Naive thymus-derived CD4-positive, alpha-beta T cell (primary cell): ENCODE measurements at regions of chr6 and their contacts with region 1.

Region 1: GRCh38 chr6:16319813-16320532 is 81.6 kb downstream of the GMPR start:
- DNase-seq: peak; percentile 33 to 91 (median 79)
- ATAC-seq: peak; percentile 70
- H3K4me3 ChIP-seq: peak overlapping the region; percentile 43
- H3K4me3 Mint-ChIP-seq: peak overlapping the region; percentile 67 to 86 (median 78)
- H3K27ac ChIP-seq: peak overlapping the region; percentile 84
- H3K27ac Mint-ChIP-seq: peak overlapping the region; percentile 91 to 97 (median 95)
- H3K4me1 ChIP-seq: peaks cover 58 to 72% of the 10 kb centered on the region in 2 donors
- H3K4me1 Mint-ChIP-seq: peaks cover 41 to 78% (median 74%) of the 10 kb centered on the region in 7 donors
- H3K27me3 ChIP-seq: no peaks in the 10 kb centered on the region
- H3K27me3 Mint-ChIP-seq: no peaks in the 10 kb centered on the region

Region 2: DNA sequence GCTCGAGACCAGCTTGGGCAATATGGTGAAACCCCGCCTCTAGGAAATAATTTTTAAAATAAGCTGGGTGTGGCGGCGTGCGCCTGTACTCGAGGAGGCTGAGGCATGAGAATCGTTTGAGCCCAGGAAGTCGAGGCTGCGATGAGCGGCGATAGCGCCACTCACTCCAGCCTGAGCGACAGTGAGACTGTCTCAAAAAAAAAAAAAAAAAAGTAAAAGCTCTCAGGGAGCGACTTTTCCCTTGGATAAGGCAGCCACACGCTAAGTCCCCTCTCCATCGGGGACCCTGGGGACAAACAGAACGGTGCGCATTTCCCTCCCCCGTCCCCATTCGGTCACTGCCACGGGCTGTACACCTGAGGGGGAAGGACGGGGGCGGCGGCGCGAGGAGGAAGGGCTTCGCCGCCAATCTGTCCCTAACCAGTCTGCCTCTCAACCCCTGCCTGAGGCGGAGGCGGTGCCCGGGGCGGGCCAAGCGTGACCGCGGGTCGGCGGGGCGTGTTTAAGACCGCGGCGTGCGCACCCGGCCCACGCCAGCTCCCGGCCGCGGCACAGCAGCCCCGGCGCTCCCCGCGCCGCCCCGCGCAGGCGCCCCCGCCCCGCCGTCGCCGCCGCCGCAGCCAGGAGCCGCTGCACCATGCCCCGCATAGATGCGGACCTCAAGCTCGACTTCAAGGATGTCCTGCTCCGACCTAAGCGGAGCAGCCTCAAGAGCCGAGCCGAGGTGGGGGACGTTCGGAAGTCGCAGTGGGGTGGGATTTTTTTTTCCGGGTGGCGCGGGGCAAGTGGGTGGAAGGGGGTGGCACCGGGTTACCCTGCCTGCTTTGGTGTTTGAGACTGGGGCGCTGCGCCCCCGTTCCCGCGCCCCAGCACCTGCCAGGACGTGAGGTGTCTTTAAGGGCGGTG is 81.7 kb before region 1 on chr6 and contains the start of gene GMPR:
- CTCF ChIA-PET with region 1: no interaction called
- POLR2A ChIA-PET with region 1: interaction called, 3 read pairs
- intact Hi-C with region 1: loop called (anchors 2 to 5 kb)
- DNase-seq: peak; percentile 51 to 85 (median 63)
- ATAC-seq: peak; percentile 94
- H3K4me3 ChIP-seq: peak within 1 kb of the TSS; percentile 85
- H3K4me3 Mint-ChIP-seq: peak within 1 kb of the TSS; percentile 88 to 96 (median 92)
- H3K27ac ChIP-seq: peak within 1 kb of the TSS; percentile 22
- H3K27ac Mint-ChIP-seq: peak within 1 kb of the TSS in 8 of 9 donors; percentile 38 to 89 (median 70)
- H3K4me1 ChIP-seq: peaks cover 8 to 10% of the 10 kb centered on the region in 2 donors
- H3K4me1 Mint-ChIP-seq: peaks cover 14 to 31% (median 22%) of the 10 kb centered on the region in 7 donors
- H3K27me3 ChIP-seq: no peaks in the 10 kb centered on the region
- H3K27me3 Mint-ChIP-seq: peaks cover 7 to 58% (median 12%) of the 10 kb centered on the region in 5 donors
- total RNA-seq, gene GMPR: 0.93 to 2.1 (median 1.5) TPM in 3 of 5 experiments, not detected in the others

Region 3: DNA sequence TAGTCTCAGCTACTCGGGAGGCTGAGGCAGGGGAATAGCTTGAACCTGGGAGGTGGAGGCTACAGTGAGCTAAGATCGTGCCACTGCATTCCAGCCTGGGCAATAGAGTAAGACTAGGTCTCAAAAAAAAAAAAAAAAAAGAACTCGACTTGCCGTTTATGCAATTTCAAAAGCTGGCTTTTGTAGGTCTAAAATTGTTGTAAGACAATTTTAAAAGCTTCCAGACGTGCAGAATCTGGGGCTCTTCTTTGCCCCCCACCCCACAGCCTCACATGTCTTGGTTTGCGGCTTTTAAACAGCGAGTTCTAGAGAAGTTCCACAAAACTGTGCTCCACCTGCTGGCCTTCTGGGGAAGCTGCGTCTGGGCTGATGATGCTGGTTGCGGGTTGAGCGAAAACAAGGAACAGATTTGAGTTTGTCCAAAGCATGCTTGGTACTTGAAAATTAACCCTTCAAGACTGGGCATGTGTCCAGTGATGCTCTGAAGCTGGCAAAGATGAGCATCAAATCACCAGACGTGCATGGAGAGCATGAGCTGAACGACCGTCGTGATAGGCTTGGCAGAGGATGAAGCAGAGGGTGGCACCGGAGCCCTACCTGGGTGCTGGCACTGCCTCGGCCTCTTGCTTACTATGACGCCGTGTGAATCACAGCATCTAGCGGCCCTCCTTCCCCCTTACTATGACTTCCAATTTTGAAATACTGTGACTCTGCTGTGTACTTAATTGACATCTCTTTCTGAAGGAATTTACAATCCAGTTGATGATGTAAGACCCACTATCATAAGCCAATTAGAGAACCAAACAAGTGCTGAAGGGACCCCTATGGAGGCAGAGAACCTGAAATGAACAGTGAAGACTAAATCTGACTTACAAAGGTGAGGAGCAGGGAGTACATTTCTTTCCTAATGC is 89.8 kb after region 1 on chr6:
- CTCF ChIA-PET with region 1: interaction called, 3 read pairs
- POLR2A ChIA-PET with region 1: interaction called, 3 read pairs
- intact Hi-C with region 1: loop called in 1 of 2 experiments (anchors 1 kb)
- DNase-seq: peak; percentile 3 to 45 (median 29)
- ATAC-seq: peak; percentile 78
- H3K4me3 ChIP-seq: no peak overlapping the region
- H3K4me3 Mint-ChIP-seq: peak overlapping the region in 6 of 10 donors; percentile 11 to 46 (median 29)
- H3K27ac ChIP-seq: no peak overlapping the region
- H3K27ac Mint-ChIP-seq: peak overlapping the region in 2 of 9 donors; percentile 34 to 45
- H3K4me1 ChIP-seq: peaks cover 0 to 8% of the 10 kb centered on the region in 2 donors
- H3K4me1 Mint-ChIP-seq: peaks cover 7 to 61% (median 20%) of the 10 kb centered on the region in 7 donors
- H3K27me3 ChIP-seq: no peaks in the 10 kb centered on the region
- H3K27me3 Mint-ChIP-seq: no peaks in the 10 kb centered on the region

Region 4: GRCh38 chr6:16651871-16652270 is 331.9 kb after region 1 on chr6:
- CTCF ChIA-PET with region 1: no interaction called
- POLR2A ChIA-PET with region 1: no interaction called
- intact Hi-C with region 1: loop called in 1 of 2 experiments (anchors 1 kb)
- DNase-seq: peak in 7 of 9 donors; percentile 4 to 55 (median 27)
- ATAC-seq: peak; percentile 88
- H3K4me3 ChIP-seq: no peak overlapping the region
- H3K4me3 Mint-ChIP-seq: peak overlapping the region in 3 of 10 donors; percentile 33 to 68 (median 41)
- H3K27ac ChIP-seq: no peak overlapping the region
- H3K27ac Mint-ChIP-seq: peak overlapping the region in 5 of 9 donors; percentile 0 to 86 (median 12)
- H3K4me1 ChIP-seq: peaks cover 11 to 48% of the 10 kb centered on the region in 2 donors
- H3K4me1 Mint-ChIP-seq: peaks cover 20 to 63% (median 24%) of the 10 kb centered on the region in 7 donors
- H3K27me3 ChIP-seq: no peaks in the 10 kb centered on the region
- H3K27me3 Mint-ChIP-seq: no peaks in the 10 kb centered on the region

Region 5: DNA sequence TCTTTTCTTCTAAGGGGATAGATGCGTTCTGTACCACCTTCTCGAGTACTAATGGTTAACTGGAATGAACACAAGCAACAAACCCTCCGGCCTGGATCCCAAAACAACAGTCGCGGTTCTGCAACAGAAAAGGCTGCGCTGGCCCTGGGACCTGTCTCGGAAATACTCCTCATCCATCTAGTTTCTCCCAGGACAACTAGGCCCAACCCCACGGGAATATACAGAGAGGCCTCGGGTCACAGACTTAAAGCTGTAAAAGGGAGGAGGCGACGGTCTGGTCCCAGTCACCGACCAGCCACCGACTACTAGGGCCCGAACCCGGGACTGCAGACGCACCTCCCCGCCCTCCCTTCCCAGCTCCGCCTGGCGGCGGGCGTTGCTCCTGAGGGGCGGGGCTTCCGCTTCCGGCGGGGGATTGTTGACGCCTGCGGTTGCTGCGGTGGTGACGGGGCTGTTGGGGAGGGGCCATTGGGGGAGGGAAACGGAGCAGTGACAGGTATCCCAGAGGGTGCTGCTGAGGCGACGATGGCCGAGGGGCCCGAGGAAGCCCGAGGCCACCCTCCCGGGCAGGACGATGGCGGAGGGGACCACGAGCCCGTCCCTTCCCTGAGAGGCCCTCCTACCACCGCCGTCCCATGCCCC is 1280.0 kb after region 1 on chr6 and contains the start of gene FAM8A1:
- CTCF ChIA-PET with region 1: no interaction called
- POLR2A ChIA-PET with region 1: no interaction called
- intact Hi-C with region 1: loop called in 1 of 2 experiments (anchors 5 kb)
- DNase-seq: peak; percentile 91 to 97 (median 94)
- ATAC-seq: peak; percentile 97
- H3K4me3 ChIP-seq: peak within 1 kb of the TSS; percentile 49
- H3K4me3 Mint-ChIP-seq: peak within 1 kb of the TSS; percentile 85 to 97 (median 94)
- H3K27ac ChIP-seq: peak within 1 kb of the TSS; percentile 94
- H3K27ac Mint-ChIP-seq: peak within 1 kb of the TSS; percentile 84 to 96 (median 93)
- H3K4me1 ChIP-seq: peaks cover 19 to 29% of the 10 kb centered on the region in 2 donors
- H3K4me1 Mint-ChIP-seq: peaks cover 29 to 48% (median 45%) of the 10 kb centered on the region in 7 donors
- H3K27me3 ChIP-seq: no peaks in the 10 kb centered on the region
- H3K27me3 Mint-ChIP-seq: no peaks in the 10 kb centered on the region
- total RNA-seq, gene FAM8A1: 8.0 to 26.1 (median 21.1) TPM

Region 6: GRCh38 chr6:18155150-18155863 is 1835.3 kb after region 1 on chr6 and contains the start of gene KDM1B:
- CTCF ChIA-PET with region 1: no interaction called
- POLR2A ChIA-PET with region 1: no interaction called
- intact Hi-C with region 1: loop called in 1 of 2 experiments (anchors 5 kb)
- DNase-seq: peak; percentile 95 to 100 (median 99)
- ATAC-seq: peak; percentile 95
- H3K4me3 ChIP-seq: peak within 1 kb of the TSS; percentile 95
- H3K4me3 Mint-ChIP-seq: peak within 1 kb of the TSS; percentile 91 to 99 (median 99)
- H3K27ac ChIP-seq: peak within 1 kb of the TSS; percentile 93
- H3K27ac Mint-ChIP-seq: peak within 1 kb of the TSS; percentile 91 to 99 (median 97)
- H3K4me1 ChIP-seq: peaks cover 8 to 17% of the 10 kb centered on the region in 2 donors
- H3K4me1 Mint-ChIP-seq: peaks cover 24 to 36% (median 28%) of the 10 kb centered on the region in 7 donors
- H3K27me3 ChIP-seq: no peaks in the 10 kb centered on the region
- H3K27me3 Mint-ChIP-seq: peaks cover 0 to 7% (median 0%) of the 10 kb centered on the region in 5 donors
- total RNA-seq, gene KDM1B: 7.3 to 25.4 (median 12.5) TPM